Activated naive CD4-positive, alpha-beta T cell treated with anti-CD3 and anti-CD28 coated beads for 36 hours (primary cell): ENCODE measurements at regions of chr9 and their contacts with region 1.

Region 1: GRCh38 chr9:127347831-127348779 is 48.9 kb upstream of the SLC2A8 start:
- DNase-seq: no peak
- H3K4me3 Mint-ChIP-seq: no peak overlapping the region
- H3K27ac Mint-ChIP-seq: no peak overlapping the region
- H3K4me1 Mint-ChIP-seq: no peaks in the 10 kb centered on the region
- H3K27me3 Mint-ChIP-seq: peaks cover 24% of the 10 kb centered on the region

Region 2: GRCh38 chr9:127277099-127277498 is 71.0 kb before region 1 on chr9:
- CTCF ChIA-PET with region 1: no interaction called
- intact Hi-C with region 1: no loop called
- DNase-seq: no peak
- H3K4me3 Mint-ChIP-seq: no peak overlapping the region
- H3K27ac Mint-ChIP-seq: no peak overlapping the region
- H3K4me1 Mint-ChIP-seq: peaks cover 11% of the 10 kb centered on the region
- H3K27me3 Mint-ChIP-seq: peaks cover 15% of the 10 kb centered on the region

Region 3: DNA sequence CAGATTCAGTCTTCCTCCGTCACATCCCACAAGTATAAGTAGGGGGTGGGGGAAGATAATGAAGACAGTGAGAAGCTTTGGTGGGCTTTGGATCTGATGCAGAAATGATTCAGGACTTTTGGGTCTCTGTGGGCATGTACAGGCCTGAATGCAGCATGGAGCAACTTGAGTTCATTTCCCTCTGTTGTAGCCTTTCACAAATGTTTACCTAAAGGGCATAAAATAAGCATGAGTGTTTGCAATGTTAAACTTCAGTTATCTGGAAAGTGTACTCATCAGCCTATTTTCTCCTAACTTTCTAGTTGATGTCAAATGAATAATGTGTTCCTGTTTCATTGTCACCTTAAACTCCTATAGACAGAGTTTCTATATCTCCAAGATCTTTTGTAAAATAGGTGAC is 44.3 kb before region 1 on chr9:
- CTCF ChIA-PET with region 1: no interaction called
- intact Hi-C with region 1: loop called (anchors 1 kb)
- DNase-seq: no peak
- H3K4me3 Mint-ChIP-seq: no peak overlapping the region
- H3K27ac Mint-ChIP-seq: no peak overlapping the region
- H3K4me1 Mint-ChIP-seq: no peaks in the 10 kb centered on the region
- H3K27me3 Mint-ChIP-seq: peaks cover 13% of the 10 kb centered on the region